Common myeloid progenitor, CD34-positive (primary cell): ENCODE measurements at regions of chr3 and their contacts with region 1.

Region 1: DNA sequence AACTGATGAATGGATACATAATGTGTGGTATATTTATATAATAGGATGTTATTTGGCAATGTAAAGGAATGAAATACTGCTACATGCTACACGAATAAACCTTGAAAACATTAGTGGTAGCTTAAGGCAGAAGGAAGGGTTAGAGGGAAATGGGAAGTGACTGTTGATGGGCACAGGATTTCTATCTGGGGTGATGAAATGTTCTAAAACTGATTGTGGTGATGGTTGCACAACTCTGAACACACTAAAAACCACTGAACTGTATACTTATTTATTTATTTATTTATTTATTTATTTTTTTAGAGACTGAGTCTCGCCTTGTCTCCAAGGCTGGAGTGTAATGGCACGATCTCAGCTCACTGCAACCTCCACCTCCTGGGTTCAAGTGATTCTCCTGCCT is 24.8 kb upstream of the SHISA5 start:
- DNase-seq: peak in 2 of 3 donors; percentile 47 to 54
- H3K4me3 ChIP-seq: no peak overlapping the region
- H3K27ac ChIP-seq: no peak overlapping the region
- H3K4me1 ChIP-seq: peaks cover 0 to 31% (median 0%) of the 10 kb centered on the region in 4 experiments
- H3K27me3 ChIP-seq: no peaks in the 10 kb centered on the region

Region 2: DNA sequence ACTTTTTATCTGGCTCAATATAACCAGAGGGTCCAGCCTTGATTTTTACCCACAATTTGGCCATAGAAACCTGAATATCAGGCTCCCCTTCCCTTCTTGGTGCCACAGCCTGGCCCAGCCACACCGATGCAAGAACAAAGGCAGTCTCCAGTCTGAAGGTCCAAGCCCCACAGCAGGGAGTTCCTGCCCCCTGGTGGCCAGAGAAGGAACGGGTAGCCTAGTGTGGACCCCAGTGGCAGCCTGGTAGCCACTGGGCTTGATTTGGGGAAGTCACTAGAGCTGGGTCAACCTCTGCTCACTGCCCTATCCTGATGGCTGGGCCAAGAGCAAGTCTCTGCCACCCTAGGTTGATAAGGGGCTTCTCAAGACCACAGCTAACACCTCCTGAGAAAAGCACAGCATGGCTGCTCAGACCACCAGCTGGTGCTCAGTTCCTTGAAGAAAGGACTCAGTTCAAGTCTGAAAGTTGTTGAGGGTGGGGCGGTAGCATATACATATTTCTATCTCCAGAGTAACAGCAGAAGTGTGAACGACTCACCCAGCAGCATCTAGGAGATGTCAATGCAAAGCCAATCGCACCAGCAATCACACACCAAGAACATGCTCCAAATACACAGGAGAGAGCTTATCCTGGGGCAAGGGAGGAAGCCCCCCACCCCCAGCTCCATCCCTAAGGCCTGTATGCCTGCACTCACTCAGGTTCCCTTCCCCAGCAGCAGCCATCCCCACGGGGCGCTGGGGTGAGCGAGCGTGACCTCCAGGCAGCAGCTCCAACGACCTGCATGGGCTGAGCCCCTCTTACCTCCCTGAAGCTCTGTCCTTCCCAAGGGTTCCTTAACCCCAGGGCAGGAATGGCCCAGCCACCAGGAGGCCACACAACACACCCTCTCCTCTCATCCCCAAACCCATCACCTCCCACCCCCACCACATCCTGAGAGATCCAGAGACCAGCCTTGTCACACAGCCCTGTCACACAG is 20.3 kb after region 1 on chr3:
- CTCF ChIA-PET with region 1: interaction called, 11 read pairs
- POLR2A ChIA-PET with region 1: no interaction called
- DNase-seq: peak; percentile 73 to 87 (median 82)
- H3K4me3 ChIP-seq: no peak overlapping the region
- H3K27ac ChIP-seq: no peak overlapping the region
- H3K4me1 ChIP-seq: peaks cover 0 to 24% (median 18%) of the 10 kb centered on the region in 4 experiments
- H3K27me3 ChIP-seq: no peaks in the 10 kb centered on the region